MCF 10A (cell line): ENCODE measurements at regions of chr9 and their contacts with region 1.

Region 1: GRCh38 chr9:26326473-26327044 is 566.0 kb downstream of the CAAP1 start:
- DNase-seq: peak; percentile 70
- H3K4me3 Mint-ChIP-seq: no peak overlapping the region
- H3K27ac Mint-ChIP-seq: no peak overlapping the region
- H3K4me1 Mint-ChIP-seq: no peaks in the 10 kb centered on the region
- H3K27me3 Mint-ChIP-seq: peaks cover 41% of the 10 kb centered on the region
- CTCF ChIP-seq: peak; percentile 68

Region 2: DNA sequence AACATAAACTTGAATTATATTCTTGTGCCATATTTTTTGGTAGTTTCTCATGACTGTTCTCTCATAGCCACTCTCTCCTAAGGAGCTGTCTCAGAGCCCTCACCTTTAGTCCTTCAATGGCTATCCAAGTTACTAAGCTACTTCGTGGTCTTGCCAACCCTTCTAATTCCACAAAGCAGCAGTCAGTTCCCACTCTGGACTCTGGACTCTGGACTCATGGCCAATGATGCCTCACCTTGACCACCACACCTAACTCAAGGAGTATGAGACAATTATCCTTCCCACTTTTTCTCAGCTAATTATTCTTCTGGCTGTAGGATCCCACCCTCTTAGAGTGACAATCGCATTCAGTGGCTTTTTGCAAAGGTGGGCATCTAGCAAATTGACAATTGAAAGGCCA is 690.5 kb before region 1 on chr9:
- CTCF ChIA-PET with region 1: no interaction called
- POLR2A ChIA-PET with region 1: no interaction called
- intact Hi-C with region 1: loop called (anchors 10 kb)
- DNase-seq: no peak
- H3K4me3 Mint-ChIP-seq: no peak overlapping the region
- H3K27ac Mint-ChIP-seq: no peak overlapping the region
- H3K4me1 Mint-ChIP-seq: no peaks in the 10 kb centered on the region
- H3K27me3 Mint-ChIP-seq: peaks cover 15% of the 10 kb centered on the region
- CTCF ChIP-seq: no peak

Region 3: DNA sequence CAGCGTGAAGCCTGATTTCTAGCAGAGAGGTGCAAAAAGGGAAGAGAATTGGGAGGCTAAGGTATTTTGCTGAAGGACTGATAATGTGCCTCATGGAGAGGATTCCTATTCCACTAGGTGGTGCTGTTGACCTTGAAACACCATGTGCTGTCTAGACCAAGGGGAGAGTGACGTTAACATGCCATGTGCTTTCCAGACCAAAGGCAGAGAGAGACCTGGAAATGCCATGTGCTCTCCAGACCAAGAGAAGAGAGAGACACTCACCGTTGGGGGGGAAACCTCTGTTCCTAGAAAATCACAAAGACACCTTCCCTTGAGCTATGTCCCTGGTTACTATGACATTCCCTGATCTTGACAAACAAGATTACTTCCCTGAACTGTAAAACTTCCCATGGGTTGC is 362.3 kb before region 1 on chr9:
- CTCF ChIA-PET with region 1: interaction called, 45 read pairs
- POLR2A ChIA-PET with region 1: no interaction called
- intact Hi-C with region 1: loop called (anchors 1 kb)
- DNase-seq: peak; percentile 84
- H3K4me3 Mint-ChIP-seq: no peak overlapping the region
- H3K27ac Mint-ChIP-seq: no peak overlapping the region
- H3K4me1 Mint-ChIP-seq: no peaks in the 10 kb centered on the region
- H3K27me3 Mint-ChIP-seq: no peaks in the 10 kb centered on the region
- CTCF ChIP-seq: peak; percentile 52

Region 4: GRCh38 chr9:26656003-26656870 is 329.7 kb after region 1 on chr9:
- CTCF ChIA-PET with region 1: interaction called, 6 read pairs
- POLR2A ChIA-PET with region 1: no interaction called
- intact Hi-C with region 1: loop called (anchors 5 kb)
- DNase-seq: peak; percentile 57
- H3K4me3 Mint-ChIP-seq: no peak overlapping the region
- H3K27ac Mint-ChIP-seq: no peak overlapping the region
- H3K4me1 Mint-ChIP-seq: no peaks in the 10 kb centered on the region
- H3K27me3 Mint-ChIP-seq: peaks cover 71% of the 10 kb centered on the region
- CTCF ChIP-seq: peak; percentile 20

Region 5: DNA sequence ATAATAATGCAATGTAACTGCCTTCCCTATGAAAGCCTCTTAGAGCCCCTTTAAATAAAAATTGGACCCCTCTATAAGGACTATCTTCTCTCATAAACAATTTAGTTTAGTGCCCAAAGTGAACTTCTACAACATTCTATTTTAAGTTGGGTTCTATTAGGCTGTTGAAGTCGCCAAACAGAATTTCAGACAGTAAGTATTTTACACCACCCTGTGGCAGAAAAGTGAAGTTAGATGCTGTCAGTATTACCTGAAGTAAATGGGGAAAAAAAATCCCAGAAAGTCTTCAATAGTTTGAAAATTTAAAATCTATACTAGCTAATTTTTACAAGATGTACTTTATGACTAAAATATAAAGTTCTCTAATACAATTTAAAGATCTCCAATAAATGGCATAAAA is 536.5 kb after region 1 on chr9:
- CTCF ChIA-PET with region 1: interaction called, 3 read pairs
- POLR2A ChIA-PET with region 1: no interaction called
- intact Hi-C with region 1: loop called (anchors 2 kb)
- DNase-seq: peak; percentile 15
- H3K4me3 Mint-ChIP-seq: no peak overlapping the region
- H3K27ac Mint-ChIP-seq: no peak overlapping the region
- H3K4me1 Mint-ChIP-seq: no peaks in the 10 kb centered on the region
- H3K27me3 Mint-ChIP-seq: no peaks in the 10 kb centered on the region
- CTCF ChIP-seq: peak; percentile 36

Region 6: GRCh38 chr9:26904070-26904469 is 577.5 kb after region 1 on chr9:
- CTCF ChIA-PET with region 1: no interaction called
- POLR2A ChIA-PET with region 1: no interaction called
- intact Hi-C with region 1: no loop called
- DNase-seq: no peak
- H3K4me3 Mint-ChIP-seq: no peak overlapping the region
- H3K27ac Mint-ChIP-seq: no peak overlapping the region
- H3K4me1 Mint-ChIP-seq: no peaks in the 10 kb centered on the region
- H3K27me3 Mint-ChIP-seq: no peaks in the 10 kb centered on the region
- CTCF ChIP-seq: no peak